Heart right ventricle (tissue), 16 donors: ENCODE measurements at regions of chr19 and their contacts with region 1.

Region 1: GRCh38 chr19:12766051-12766521 is 9.3 kb downstream of the HOOK2 start:
- DNase-seq: peak; percentile 85 to 91
- ATAC-seq: peak in 7 of 8 donors; percentile 67 to 90 (median 77)
- H3K4me3 ChIP-seq: peak overlapping the region in 7 of 10 donors; percentile 28 to 59 (median 44)
- H3K27ac ChIP-seq: peak overlapping the region in 9 of 10 donors; percentile 31 to 83 (median 53)
- H3K4me1 ChIP-seq: peaks cover 0 to 39% (median 4%) of the 10 kb centered on the region in 9 donors
- H3K27me3 ChIP-seq: no peaks in the 10 kb centered on the region
- CTCF ChIP-seq: peak in 7 of 9 donors; percentile 71 to 99 (median 88)

Region 2: GRCh38 chr19:12796146-12797071 is 30.3 kb after region 1 on chr19:
- intact Hi-C with region 1: loop called in 9 of 10 experiments (anchors 5 kb)
- DNase-seq: peak; percentile 66 to 78
- ATAC-seq: peak in 5 of 8 donors; percentile 3 to 35 (median 29)
- H3K4me3 ChIP-seq: peak overlapping the region in 2 of 10 donors; percentile 1 to 17
- H3K27ac ChIP-seq: peak overlapping the region in 9 of 10 donors; percentile 13 to 100 (median 36)
- H3K4me1 ChIP-seq: peaks cover 0 to 46% (median 35%) of the 10 kb centered on the region in 9 donors
- H3K27me3 ChIP-seq: no peaks in the 10 kb centered on the region
- CTCF ChIP-seq: peak; percentile 88 to 95 (median 93)

Region 3: GRCh38 chr19:12806239-12807081 is 40.4 kb after region 1 on chr19 and contains the start of gene RNASEH2A:
- intact Hi-C with region 1: loop called in 2 of 10 experiments (anchors 5 kb)
- DNase-seq: peak; percentile 89 to 92
- ATAC-seq: peak; percentile 80 to 94 (median 92)
- H3K4me3 ChIP-seq: peak within 1 kb of the TSS; percentile 27 to 80 (median 62)
- H3K27ac ChIP-seq: peak within 1 kb of the TSS in 9 of 10 donors; percentile 41 to 81 (median 66)
- H3K4me1 ChIP-seq: peaks cover 6 to 26% (median 17%) of the 10 kb centered on the region in 9 donors
- H3K27me3 ChIP-seq: peaks cover 0 to 12% (median 0%) of the 10 kb centered on the region in 7 donors
- CTCF ChIP-seq: peak in 2 of 9 donors; percentile 10 to 21
- total RNA-seq, gene RNASEH2A: 1.9 to 5.7 (median 4.1) TPM

Region 4: GRCh38 chr19:12840091-12841079 is 74.3 kb after region 1 on chr19:
- intact Hi-C with region 1: loop called in 5 of 10 experiments (anchors 5 to 10 kb)
- DNase-seq: peak in 1 of 2 donors; percentile 38
- ATAC-seq: peak in 6 of 8 donors; percentile 16 to 53 (median 36)
- H3K4me3 ChIP-seq: peak overlapping the region in 8 of 10 donors; percentile 8 to 33 (median 20)
- H3K27ac ChIP-seq: no peak overlapping the region
- H3K4me1 ChIP-seq: peaks cover 0 to 25% (median 14%) of the 10 kb centered on the region in 9 donors
- H3K27me3 ChIP-seq: peaks cover 16 to 100% (median 94%) of the 10 kb centered on the region in 7 donors
- CTCF ChIP-seq: no peak

Region 5: GRCh38 chr19:12881172-12881808 is 115.2 kb after region 1 on chr19 and contains the start of gene DNASE2:
- intact Hi-C with region 1: no loop called
- DNase-seq: peak; percentile 95 to 96
- ATAC-seq: peak; percentile 92 to 97 (median 96)
- H3K4me3 ChIP-seq: peak within 1 kb of the TSS; percentile 62 to 85 (median 74)
- H3K27ac ChIP-seq: peak within 1 kb of the TSS; percentile 67 to 93 (median 86)
- H3K4me1 ChIP-seq: peaks cover 10 to 55% (median 24%) of the 10 kb centered on the region in 9 donors
- H3K27me3 ChIP-seq: peaks cover 0 to 36% (median 27%) of the 10 kb centered on the region in 7 donors
- CTCF ChIP-seq: no peak
- total RNA-seq, gene DNASE2: 16.9 to 34.9 (median 19.9) TPM